ENCODE measurements at regions of chr14 and their contacts with region 1.

Region 1: DNA sequence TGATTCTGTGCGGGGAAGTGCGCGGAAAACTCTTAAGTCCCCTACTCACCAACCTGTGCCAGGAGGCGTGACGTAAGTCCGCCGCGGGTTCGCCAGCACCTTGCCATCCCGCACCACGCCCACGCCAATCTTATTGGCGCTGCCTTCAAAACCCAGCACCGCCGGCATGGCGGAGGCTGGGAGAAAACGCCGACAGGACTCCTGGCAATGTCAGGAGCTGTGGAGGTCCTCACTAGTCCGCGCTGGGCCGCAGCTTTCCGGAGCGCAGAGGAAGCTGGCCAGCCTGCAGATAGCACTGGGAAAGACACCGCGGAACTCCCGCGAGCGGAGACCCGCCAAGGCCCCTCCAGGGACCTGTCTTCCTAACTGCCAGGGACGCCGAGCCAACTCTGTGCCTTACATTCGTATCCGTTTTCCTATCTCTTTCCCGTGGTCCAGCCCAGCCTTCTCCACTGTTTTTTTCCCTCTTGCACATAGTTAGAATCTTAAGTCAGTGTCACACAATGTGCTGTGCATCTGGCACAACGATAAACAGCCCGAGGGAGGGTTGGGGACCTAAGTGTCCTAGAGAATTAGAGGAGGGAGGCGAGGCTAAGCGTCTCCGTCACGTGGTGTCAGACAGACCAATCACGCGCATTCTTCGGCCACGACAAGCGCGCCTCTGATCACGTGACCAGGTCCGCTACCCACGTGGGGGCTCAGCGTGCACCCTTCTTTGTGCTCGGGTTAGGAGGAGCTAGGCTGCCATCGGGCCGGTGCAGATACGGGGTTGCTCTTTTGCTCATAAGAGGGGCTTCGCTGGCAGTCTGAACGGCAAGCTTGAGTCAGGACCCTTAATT is at the starts of genes APEX1 and OSGEP:
- DNase-seq: peak; percentile 99
- H3K4me3 ChIP-seq: peak within 1 kb of the TSS; percentile 54 to 70 (median 59)
- H3K27ac ChIP-seq: peak within 1 kb of the TSS; percentile 81 to 94 (median 85)
- H3K4me1 ChIP-seq: peaks cover 17 to 23% of the 10 kb centered on the region in 2 donors
- H3K27me3 ChIP-seq: no peaks in the 10 kb centered on the region
- CTCF ChIP-seq: peak in 1 of 6 experiments; percentile 18
- POLR2A ChIP-seq: peak in 1 of 2 donors; percentile 84
- total RNA-seq, gene APEX1: 133 to 179 (median 142) TPM
- total RNA-seq, gene OSGEP: 56.7 to 88.8 (median 75.0) TPM

Region 2: GRCh38 chr14:20093442-20093841 is 361.3 kb before region 1 on chr14:
- intact Hi-C with region 1: no loop called
- DNase-seq: no peak
- H3K4me3 ChIP-seq: no peak overlapping the region
- H3K27ac ChIP-seq: no peak overlapping the region
- H3K4me1 ChIP-seq: no peaks in the 10 kb centered on the region
- H3K27me3 ChIP-seq: no peaks in the 10 kb centered on the region
- CTCF ChIP-seq: no peak
- POLR2A ChIP-seq: no peak

Region 3: DNA sequence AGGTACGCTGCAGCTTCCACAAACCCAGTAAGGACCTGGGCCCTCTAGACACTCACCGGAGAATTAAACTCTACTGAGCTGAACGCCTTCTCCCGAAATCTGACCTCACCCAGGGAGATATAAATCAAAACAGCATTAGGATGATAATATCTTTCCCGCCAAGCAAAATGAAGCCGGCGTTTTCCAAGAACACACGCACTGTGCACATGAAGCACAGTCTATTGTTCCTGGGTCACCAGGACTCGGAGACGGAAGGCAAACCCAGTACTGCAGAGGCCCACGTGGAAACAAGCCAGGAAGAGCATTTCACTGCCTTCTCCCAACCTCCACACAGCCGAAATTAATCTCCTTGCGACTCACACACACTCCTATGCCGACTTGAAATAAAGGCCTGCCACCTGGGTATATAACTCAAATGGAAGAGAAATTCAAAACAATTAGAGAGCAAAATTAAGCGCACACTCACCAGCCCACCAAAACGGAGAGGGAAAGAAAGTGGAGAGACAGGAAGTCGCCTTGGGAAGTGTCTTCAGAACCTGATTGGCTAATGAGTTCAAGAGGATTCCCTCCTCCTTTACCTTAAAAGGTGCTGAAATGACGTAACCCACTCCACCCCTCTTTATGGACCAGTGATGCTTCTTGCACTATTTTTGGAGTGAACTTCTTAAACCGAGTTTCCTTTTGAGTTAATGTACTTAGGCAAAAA is 121.8 kb before region 1 on chr14 and contains the start of gene CCNB1IP1:
- intact Hi-C with region 1: loop called (anchors 10 kb)
- DNase-seq: peak; percentile 64 to 67
- H3K4me3 ChIP-seq: peak within 1 kb of the TSS in 2 of 3 donors; percentile 37 to 49
- H3K27ac ChIP-seq: peak within 1 kb of the TSS; percentile 66 to 79 (median 77)
- H3K4me1 ChIP-seq: peaks cover 13 to 16% of the 10 kb centered on the region in 2 donors
- H3K27me3 ChIP-seq: no peaks in the 10 kb centered on the region
- CTCF ChIP-seq: no peak
- POLR2A ChIP-seq: peak in 1 of 2 donors; percentile 84
- total RNA-seq, gene CCNB1IP1: 57.2 to 150 (median 92.9) TPM